Ascending aorta (tissue), 2 donors: ENCODE measurements at regions of chr4 and their contacts with region 1.

Region 1: GRCh38 chr4:1693129-1693896 is 9.2 kb upstream of the FAM53A start:
- DNase-seq: no peak
- H3K4me3 ChIP-seq: no peak overlapping the region
- H3K27ac ChIP-seq: no peak overlapping the region
- H3K4me1 ChIP-seq: no peaks in the 10 kb centered on the region
- H3K27me3 ChIP-seq: no peaks in the 10 kb centered on the region
- CTCF ChIP-seq: peak; percentile 77 to 90 (median 85)

Region 2: DNA sequence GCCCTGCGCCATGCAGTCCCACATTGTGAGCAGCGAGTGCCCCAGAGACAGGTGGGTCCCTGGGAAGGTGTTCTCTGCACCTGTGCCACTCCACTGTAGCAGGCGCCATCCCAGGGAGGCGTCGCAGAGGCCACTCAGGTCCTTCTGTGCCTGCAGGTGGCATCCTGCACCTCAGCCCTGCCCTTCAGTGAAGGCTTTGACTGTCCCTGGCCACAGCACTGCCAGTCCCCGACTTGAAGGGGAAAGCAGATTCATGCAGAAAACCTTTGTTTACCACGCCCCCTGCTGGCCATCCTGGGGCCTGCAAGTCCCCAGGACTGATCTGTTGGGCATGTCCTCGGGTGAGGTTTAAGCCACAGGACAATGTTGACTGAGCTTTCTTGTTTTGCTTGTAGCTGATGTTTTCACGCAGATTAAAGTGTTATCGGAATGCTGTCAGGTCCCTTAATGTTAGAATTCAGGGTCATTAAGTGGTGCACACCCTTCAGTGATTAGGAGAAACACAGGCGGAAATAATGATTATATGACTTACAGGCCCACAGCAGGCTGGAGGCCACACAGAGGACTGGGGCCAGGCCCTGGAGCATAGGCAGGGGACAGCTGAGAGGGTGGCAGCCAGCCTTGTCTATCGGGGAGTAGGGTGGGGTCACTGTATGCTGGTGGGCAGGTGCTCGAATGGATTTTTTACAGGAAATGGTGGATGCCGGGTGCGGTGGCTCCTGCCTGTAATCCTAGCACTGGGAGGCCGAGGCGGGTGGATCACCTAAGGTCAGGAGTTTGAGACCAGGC is 33.0 kb after region 1 on chr4:
- intact Hi-C with region 1: loop called (anchors 1 kb)
- DNase-seq: peak; percentile 71 to 95
- H3K4me3 ChIP-seq: no peak overlapping the region
- H3K27ac ChIP-seq: no peak overlapping the region
- H3K4me1 ChIP-seq: peaks cover 6 to 9% of the 10 kb centered on the region in 2 donors
- H3K27me3 ChIP-seq: no peaks in the 10 kb centered on the region
- CTCF ChIP-seq: peak; percentile 77 to 98 (median 98)